Astrocyte of the cerebellum (primary cell): ENCODE measurements at regions of chr11 and their contacts with region 1.

Region 1: DNA sequence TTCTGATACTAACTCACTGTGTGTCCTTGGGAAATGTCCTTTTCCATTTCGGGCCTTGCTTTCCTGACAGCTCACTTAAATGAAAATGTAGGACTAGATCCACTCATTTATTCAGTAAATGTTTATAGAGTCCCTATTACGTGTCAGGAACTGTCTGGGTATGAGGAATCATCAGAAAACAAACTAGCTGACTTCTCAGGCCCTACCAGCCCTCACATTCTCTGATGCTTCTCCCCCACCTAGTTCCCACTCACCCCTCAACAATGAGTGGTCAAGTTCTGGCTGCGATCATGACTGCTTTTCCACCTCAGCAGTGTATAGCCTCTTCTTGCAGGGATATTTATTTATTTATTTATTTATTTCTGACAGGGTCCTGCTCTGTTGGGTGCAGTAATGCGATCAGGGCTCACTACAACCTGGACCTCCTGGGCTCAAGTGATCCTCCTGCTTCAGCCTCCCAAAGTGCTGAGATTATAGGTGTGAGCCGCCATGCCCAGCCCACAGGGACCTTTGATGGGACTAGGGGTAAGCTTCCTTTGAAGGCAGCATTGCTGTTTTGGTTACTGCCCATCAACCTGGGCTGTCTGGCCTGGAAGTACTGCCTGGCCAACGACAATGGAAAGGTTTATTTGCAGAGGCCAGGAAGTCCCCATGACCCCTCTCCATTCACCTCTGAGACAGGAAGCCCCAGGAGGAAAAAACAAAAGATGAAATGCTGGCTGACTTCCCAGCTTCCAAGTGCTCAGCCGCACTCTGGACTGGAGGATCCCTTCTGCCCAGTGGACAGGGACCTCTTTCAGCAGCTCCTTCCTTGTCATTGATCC is 33.1 kb upstream of the POLD3 start:
- DNase-seq: no peak
- H3K4me3 ChIP-seq: no peak overlapping the region
- CTCF ChIP-seq: no peak

Region 2: DNA sequence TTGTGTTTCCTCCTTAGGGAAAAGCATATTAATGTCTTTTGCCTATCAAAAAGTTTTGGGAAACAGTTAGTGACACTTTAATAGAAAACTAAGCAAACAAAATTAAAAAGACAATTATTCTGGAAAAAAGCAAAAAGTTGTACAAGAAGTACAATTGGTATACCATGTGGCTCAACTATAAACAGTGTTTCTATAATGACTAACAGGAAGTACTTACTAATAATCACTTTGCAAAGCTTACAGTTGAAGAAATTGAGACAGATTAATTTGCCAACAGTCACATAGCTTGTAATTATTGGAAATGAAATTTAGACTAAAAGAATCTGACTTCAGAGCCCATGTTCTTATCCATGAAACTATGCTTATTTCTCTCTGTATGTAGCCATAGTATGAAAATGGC is 363.5 kb before region 1 on chr11:
- in situ Hi-C with region 1: no loop called
- DNase-seq: no peak
- H3K4me3 ChIP-seq: no peak overlapping the region
- CTCF ChIP-seq: no peak

Region 3: GRCh38 chr11:74255741-74256369 is 303.5 kb before region 1 on chr11:
- in situ Hi-C with region 1: loop called (anchors 10 kb)
- DNase-seq: peak; percentile 46
- H3K4me3 ChIP-seq: no peak overlapping the region
- CTCF ChIP-seq: peak; percentile 92

Region 4: GRCh38 chr11:74506823-74507222 is 52.5 kb before region 1 on chr11:
- in situ Hi-C with region 1: loop called (anchors 5 kb)
- DNase-seq: no peak
- H3K4me3 ChIP-seq: no peak overlapping the region
- CTCF ChIP-seq: no peak

Region 5: DNA sequence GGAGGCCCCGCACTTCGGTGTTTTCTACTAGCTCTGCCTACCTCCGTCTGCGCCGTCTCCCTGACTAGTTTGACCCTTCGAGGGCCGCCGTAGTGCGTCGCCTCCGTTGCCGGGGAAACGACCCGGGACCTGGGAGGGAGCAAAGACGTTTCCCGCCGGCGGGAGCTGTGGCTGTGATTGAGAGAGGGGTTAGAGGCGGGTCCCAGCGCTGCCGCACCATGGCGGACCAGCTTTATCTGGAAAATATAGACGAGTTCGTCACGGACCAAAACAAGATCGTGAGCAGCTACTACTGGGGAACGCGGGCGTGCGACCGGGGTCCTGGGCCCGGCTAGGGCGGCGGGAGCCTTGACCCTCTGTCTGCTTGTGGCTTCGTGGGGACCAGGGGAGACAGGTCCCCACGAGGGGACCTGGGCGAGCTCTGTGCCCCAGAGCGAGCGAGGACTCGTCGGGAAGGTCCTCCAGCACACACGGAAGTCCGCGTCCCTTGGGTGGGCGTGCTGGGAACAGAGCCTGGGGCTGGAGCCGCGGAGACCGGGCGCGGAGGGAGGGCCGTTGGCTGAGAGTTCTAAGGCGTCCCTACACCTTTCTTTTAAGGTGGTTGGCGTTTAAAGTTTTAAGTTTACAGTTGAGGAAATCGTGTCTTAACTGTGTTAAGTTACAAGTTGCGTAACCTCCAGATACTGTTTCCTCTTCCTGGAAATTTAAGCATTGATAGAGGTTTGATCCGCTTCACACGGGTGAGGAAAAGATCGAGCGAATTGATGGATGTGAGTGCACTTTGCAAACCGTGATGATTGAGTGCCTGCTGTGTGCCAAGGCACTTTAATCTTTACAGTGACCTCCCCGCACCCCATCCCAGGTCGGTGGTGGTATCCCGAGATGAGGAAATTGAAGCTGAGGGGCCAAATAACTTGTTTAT is 33.4 kb after region 1 on chr11 and contains the start of gene POLD3:
- in situ Hi-C with region 1: no loop called
- DNase-seq: peak; percentile 61
- H3K4me3 ChIP-seq: peak within 1 kb of the TSS; percentile 96
- CTCF ChIP-seq: no peak